HepG2 (cell line): ENCODE measurements at regions of chr1 and their contacts with region 1.

Region 1: DNA sequence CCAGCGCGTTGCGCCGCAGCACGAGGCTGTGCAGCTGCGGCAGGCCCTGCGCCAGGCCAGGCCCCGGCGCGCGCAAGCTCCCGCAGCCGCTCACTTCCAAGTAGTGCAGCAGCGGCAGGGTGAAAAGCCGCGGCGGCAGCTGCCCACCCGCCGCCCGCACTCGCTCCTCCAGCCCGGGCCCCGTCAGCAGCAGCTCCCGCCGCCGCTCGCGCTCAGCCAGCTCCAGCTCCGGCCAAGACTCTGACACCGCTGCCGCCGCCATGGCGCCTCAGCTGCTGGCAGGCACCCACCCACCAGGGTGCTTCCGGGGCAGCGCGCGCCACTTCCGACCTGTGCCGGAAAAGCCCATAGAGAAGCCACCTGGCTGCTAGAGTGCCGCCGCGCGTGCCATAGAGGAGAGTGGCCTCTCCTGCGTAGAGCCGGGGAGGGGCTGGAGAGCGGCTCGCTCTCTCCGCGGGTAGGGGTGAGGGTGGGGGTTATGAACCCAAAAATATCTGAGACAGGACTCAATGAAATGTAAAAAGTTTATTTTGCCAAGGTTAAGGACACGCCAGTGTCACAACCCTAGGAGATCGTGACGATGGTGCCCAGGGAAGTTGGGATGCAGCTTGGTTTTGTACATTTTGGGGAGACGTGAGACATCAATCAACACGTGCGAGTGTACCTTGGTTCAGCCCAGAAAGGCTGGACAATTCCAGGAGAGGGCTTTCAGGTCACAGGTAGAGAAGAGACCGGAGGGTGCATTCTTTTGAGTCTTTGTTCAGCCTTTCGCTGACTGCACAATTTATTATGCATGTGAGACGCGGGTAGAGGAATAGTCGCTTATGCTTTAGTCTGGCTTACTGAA is at the start of gene LRRC47:
- DNase-seq: peak; percentile 83
- ATAC-seq: peak; percentile 99
- H3K4me3 ChIP-seq: peak within 1 kb of the TSS; percentile 91 to 95 (median 92)
- H3K27ac ChIP-seq: peak within 1 kb of the TSS; percentile 77
- H3K4me1 ChIP-seq: peaks cover 39% of the 10 kb centered on the region
- H3K27me3 ChIP-seq: peaks cover 0 to 4% of the 10 kb centered on the region in 2 experiments; a peak in 2 of 5 replicates
- CTCF ChIP-seq: 0 out of 2 replicates have a peak, but pooled peaks have one; percentile 14
- EP300 ChIP-seq: no peak
- POLR2A ChIP-seq: peak; percentile 62 to 74
- RAD21 ChIP-seq: peak; percentile 31
- total RNA-seq, gene LRRC47: 52.4 and 52.5 TPM in 2 replicates

Region 2: DNA sequence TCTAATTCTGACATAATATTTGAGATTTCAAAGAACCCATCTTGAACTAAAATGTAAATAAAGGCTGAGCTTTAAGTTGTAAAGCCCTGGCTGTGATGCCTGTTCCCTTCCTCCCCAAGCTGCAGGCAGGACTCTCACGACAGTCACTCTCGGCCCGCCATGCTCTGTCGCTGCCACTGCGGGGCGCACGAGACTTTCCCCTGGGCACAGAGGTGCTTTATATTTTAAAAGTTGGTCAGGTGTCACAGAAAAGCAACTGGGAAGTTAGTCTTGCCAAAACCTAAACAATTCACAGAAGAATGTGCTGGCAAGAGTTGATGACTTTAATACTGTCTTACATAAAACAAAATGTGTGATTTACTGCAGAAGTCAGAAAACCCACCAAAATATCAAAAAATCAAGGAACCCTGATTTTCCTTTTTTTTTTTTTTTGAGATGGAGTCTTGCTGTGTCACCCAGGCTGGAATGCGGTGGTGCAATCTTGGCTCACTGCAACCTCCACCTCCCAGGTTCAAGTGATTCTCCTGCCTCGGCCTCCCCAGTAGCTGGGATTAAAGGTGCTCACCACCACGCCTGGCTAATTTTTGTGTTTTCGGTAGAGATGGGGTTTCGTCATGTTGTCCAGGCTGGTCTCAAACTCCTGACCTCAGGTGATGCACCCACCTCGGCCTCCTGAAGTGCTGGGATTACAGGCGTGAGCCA is 10.8 kb before region 1 on chr1:
- CTCF ChIA-PET with region 1: interaction called, 10 read pairs
- POLR2A ChIA-PET with region 1: interaction called, 15 read pairs
- in situ Hi-C with region 1: no loop called
- intact Hi-C with region 1: loop called (anchors 1 kb)
- DNase-seq: peak; percentile 60
- ATAC-seq: peak; percentile 78
- H3K4me3 ChIP-seq: no peak overlapping the region
- H3K27ac ChIP-seq: peak overlapping the region; percentile 47
- H3K4me1 ChIP-seq: peaks cover 25% of the 10 kb centered on the region
- H3K27me3 ChIP-seq: no peaks in the 10 kb centered on the region
- CTCF ChIP-seq: peak; percentile 91
- EP300 ChIP-seq: no peak
- POLR2A ChIP-seq: no peak
- RAD21 ChIP-seq: peak; percentile 54; the same call in 1 of the 2 replicates